PC-3 (cell line): ENCODE measurements at regions of chr15 and their contacts with region 1.

Region 1: DNA sequence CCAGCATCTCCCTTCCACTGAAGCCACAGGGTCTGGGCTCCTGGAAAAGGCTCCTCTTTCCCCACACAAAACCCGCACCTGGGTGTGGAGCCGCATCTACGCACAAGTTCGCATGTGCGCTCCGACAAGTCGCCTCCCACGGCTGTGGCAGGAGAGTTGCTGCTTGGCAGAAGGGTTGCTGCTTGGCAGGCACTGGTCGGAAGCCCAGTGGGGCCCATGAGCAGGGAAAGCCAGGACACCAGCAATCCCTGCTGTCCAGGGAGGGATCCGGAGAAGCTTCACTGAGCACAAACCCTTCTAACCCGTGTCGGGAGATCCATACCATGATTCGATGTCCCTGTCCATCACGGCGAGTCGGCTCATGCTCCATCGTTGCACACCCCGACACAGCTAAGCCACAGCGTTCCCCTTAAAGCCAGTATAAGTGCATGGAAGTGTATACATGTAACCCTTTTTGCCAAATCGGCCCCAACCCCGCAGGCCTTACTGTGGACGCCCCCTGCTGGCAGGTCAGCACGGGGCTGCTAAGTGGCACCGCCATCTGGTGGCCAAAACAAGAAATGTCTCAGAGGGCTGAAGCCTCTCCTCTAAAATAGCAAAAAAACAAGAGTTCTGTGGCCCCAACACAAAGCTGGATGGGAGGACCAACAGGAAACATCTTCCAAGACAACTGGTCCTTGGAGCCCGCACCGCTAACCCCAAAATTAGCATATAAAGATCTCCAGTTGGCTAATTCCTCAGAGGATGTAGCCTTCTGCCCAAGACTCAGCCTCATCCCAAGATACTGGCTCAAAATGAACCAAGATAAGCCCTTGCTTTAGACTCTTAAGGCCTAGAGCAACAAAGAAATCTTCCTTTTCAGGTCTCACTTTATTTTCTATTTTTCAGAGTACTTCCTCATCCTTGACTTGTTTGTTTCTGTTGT is 8.3 kb downstream of the ANKRD63 start:
- DNase-seq: peak; percentile 88
- ATAC-seq: peak; percentile 63
- H3K4me3 ChIP-seq: no peak overlapping the region
- H3K27ac ChIP-seq: no peak overlapping the region
- H3K4me1 ChIP-seq: no peaks in the 10 kb centered on the region
- H3K27me3 ChIP-seq: no peaks in the 10 kb centered on the region
- CTCF ChIP-seq: peak; percentile 100

Region 2: GRCh38 chr15:40044717-40045571 is 229.7 kb before region 1 on chr15:
- CTCF ChIA-PET with region 1: interaction called, 9 read pairs
- POLR2A ChIA-PET with region 1: no interaction called
- intact Hi-C with region 1: loop called (anchors 1 kb)
- DNase-seq: peak; percentile 88
- ATAC-seq: peak; percentile 91
- H3K4me3 ChIP-seq: peak overlapping the region; percentile 57
- H3K27ac ChIP-seq: peak overlapping the region; percentile 12; the same call in 1 of the 2 replicates
- H3K4me1 ChIP-seq: peaks cover 39% of the 10 kb centered on the region
- H3K27me3 ChIP-seq: no peaks in the 10 kb centered on the region
- CTCF ChIP-seq: peak; percentile 99

Region 3: DNA sequence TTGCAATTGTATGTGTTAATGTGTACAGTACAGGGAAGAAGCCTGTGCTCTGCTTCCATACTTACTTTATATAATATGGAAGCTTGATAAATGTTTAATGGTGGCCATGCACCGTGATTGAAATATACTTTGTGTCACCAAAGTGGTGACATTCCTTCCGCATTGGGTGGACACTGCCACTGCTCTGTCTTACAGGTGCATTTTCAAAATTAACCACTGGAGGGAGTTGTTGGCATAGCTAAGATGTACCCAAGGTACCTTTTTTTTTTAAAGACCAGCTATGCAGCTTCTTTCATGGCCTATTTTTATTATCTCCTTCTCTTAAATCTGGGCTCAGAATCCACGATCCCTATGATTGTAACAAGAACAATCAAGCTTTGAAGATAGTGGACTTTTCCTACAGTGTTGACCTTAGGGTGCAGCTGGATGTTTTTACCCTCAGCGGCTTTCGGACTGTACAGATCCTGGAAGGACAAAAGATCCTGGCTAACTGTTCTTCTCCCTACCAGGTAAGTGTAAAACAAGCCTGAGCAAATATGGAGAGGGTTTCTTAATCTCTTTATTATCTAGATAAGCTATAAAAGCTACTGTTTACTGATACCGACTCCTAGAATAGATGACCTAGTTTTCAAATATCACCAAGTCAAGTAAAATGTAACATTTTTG is 57.3 kb before region 1 on chr15:
- CTCF ChIA-PET with region 1: interaction called, 86 read pairs
- POLR2A ChIA-PET with region 1: no interaction called
- intact Hi-C with region 1: loop called (anchors 1 kb)
- DNase-seq: peak; percentile 92
- ATAC-seq: peak; percentile 85
- H3K4me3 ChIP-seq: no peak overlapping the region
- H3K27ac ChIP-seq: no peak overlapping the region
- H3K4me1 ChIP-seq: no peaks in the 10 kb centered on the region
- H3K27me3 ChIP-seq: no peaks in the 10 kb centered on the region
- CTCF ChIP-seq: peak; percentile 94

Region 4: GRCh38 chr15:40238532-40239403 is 35.8 kb before region 1 on chr15 and contains the start of gene PAK6:
- CTCF ChIA-PET with region 1: interaction called, 11 read pairs
- POLR2A ChIA-PET with region 1: no interaction called
- intact Hi-C with region 1: loop called (anchors 5 kb)
- DNase-seq: peak; percentile 93
- ATAC-seq: peak; percentile 91
- H3K4me3 ChIP-seq: peak within 1 kb of the TSS; percentile 67
- H3K27ac ChIP-seq: peak within 1 kb of the TSS; percentile 34
- H3K4me1 ChIP-seq: peaks cover 32% of the 10 kb centered on the region
- H3K27me3 ChIP-seq: no peaks in the 10 kb centered on the region
- CTCF ChIP-seq: no peak
- total RNA-seq, gene PAK6: 30.4 TPM in 2 replicates

Region 5: DNA sequence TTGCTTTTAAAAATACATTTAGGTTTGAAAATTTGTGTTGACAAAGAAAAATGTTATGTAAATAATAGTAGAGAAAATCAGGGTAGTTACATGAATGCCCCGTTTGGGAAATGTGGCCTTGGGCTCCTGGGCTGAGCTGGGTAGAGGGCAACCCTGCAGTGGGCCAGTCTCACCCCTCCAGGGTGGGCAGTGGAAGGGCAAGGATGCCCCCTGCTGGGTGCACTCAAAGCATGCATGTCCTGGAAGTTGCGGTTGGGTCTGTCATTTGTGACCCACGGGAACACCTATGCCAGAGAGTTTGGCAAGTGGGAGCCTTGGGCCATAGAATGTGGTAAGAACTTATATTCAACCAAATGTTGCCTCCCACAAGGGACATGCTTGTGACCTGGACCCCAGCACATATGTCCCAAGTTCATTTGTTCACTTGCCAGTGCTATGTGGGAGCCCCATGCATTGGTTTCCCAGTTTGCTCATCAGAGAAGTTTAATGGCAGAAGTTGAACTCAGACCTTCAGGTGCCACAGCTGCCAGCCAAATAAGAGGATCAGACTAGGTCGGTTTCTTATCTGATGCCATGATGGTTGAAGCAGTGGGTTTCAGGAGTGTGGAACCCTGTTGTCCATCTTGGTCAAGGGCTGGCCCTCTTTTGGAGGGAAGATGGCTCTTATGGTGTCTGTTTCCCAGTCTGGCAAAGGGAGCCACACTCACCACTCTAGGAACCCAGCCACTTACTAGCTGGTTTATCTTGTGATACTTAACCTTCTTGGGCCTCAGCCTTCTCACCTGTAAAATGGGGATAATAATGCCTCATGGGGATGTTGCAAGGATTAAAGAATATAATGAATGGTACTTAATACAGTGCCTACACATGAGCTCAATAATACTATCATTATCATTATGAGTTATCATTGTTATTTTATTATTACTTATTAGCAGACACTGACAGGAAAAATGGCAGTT is 35.7 kb after region 1 on chr15:
- CTCF ChIA-PET with region 1: interaction called, 27 read pairs
- POLR2A ChIA-PET with region 1: interaction called, 4 read pairs
- intact Hi-C with region 1: loop called (anchors 1 kb)
- DNase-seq: peak; percentile 68
- ATAC-seq: peak; percentile 69
- H3K4me3 ChIP-seq: no peak overlapping the region
- H3K27ac ChIP-seq: no peak overlapping the region
- H3K4me1 ChIP-seq: peaks cover 7% of the 10 kb centered on the region; the same call in 1 of the 2 replicates
- H3K27me3 ChIP-seq: no peaks in the 10 kb centered on the region
- CTCF ChIP-seq: peak; percentile 83

Region 6: DNA sequence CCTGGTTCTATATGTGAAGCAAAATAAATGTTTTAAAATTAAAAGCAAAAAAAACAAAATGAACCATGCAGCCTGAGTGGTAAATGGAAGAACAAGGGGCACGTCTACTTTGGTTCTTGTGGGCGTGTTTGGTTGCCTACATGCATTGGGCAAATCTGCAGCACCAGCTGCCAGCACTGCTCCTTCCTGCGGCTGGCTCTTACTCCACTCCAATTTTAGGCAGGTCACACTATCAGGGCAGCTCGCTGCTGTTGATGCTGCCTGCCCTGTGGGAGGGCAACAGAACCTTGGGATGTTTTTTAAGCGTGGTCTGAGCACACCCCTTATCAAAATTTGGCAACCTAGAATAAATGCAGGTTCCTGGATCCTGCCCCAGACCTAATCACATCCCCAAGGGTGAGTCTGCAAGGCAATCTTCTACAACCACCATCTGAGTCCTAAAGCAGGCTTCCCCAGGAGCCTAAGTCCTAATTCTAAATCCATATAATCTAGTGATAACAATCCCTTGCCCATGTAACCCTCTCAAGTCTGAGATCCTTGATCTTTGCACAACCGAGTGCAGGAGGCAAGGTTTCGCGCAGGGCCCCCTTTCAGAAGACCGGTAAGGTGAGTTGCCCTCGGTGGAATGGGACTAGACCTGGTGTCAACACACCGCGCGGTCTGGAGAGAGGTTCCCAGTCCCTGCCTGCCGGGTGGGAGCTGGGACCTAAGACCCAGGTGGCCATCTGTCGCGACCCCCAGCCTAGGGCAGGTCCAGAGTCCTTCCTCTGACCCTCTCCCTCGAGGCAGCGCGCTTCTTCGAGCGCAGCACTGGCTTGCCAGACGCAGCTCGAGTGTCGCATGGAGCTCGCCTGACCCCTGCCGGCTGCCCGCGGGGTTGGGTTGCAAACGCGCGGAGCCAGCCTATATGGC is 146.9 kb after region 1 on chr15:
- CTCF ChIA-PET with region 1: interaction called, 4 read pairs
- POLR2A ChIA-PET with region 1: no interaction called
- intact Hi-C with region 1: loop called (anchors 1 kb)
- DNase-seq: peak; percentile 82
- ATAC-seq: peak; percentile 84
- H3K4me3 ChIP-seq: peak overlapping the region; percentile 36; the same call in 1 of the 2 replicates
- H3K27ac ChIP-seq: peak overlapping the region; percentile 31
- H3K4me1 ChIP-seq: peaks cover 23% of the 10 kb centered on the region
- H3K27me3 ChIP-seq: no peaks in the 10 kb centered on the region
- CTCF ChIP-seq: peak; percentile 94